ENCODE measurements at regions of chrX and their contacts with region 1.

Region 1: GRCh38 chrX:70168238-70169188 is 8.8 kb upstream of the DGAT2L6 start:
- DNase-seq: peak; percentile 49
- H3K4me3 ChIP-seq: no peak overlapping the region
- H3K27ac ChIP-seq: no peak overlapping the region
- H3K4me1 ChIP-seq: peaks cover 5% of the 10 kb centered on the region
- H3K27me3 ChIP-seq: no peaks in the 10 kb centered on the region
- CTCF ChIP-seq: no peak

Region 2: GRCh38 chrX:69510137-69510715 is 658.3 kb before region 1 on chrX:
- CTCF ChIA-PET with region 1: no interaction called
- POLR2A ChIA-PET with region 1: no interaction called
- intact Hi-C with region 1: no loop called
- DNase-seq: no peak
- H3K4me3 ChIP-seq: no peak overlapping the region
- H3K27ac ChIP-seq: no peak overlapping the region
- H3K4me1 ChIP-seq: no peaks in the 10 kb centered on the region
- H3K27me3 ChIP-seq: no peaks in the 10 kb centered on the region
- CTCF ChIP-seq: no peak

Region 3: GRCh38 chrX:70133303-70134115 is 35.0 kb before region 1 on chrX and contains the start of gene IGBP1:
- CTCF ChIA-PET with region 1: no interaction called
- POLR2A ChIA-PET with region 1: interaction called, 16 read pairs
- intact Hi-C with region 1: no loop called
- DNase-seq: peak; percentile 89
- H3K4me3 ChIP-seq: peak within 1 kb of the TSS; percentile 59
- H3K27ac ChIP-seq: peak within 1 kb of the TSS; percentile 87
- H3K4me1 ChIP-seq: no peaks in the 10 kb centered on the region
- H3K27me3 ChIP-seq: no peaks in the 10 kb centered on the region
- CTCF ChIP-seq: peak; percentile 62
- total RNA-seq, gene IGBP1: 35.2 and 36.2 TPM in 2 replicates

Region 4: DNA sequence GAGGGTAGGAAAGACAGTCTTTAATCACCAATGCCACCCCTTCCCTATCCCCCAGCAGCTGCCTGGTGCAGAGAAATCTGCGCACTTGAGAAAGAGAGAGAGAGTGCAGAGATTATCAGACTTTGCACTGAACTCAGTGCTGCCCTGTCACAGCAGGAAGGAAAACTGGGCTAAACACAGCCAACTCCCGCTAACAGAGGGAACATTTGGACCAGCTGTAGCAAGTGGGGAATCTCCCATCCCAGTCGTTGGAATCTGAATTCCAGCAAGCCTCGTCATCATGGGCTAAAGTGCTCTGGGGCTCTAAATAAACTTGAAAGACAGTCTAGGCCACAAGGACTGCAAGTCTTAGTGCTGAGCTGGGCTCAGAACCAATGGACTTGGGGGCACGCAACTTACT is 444.8 kb after region 1 on chrX:
- CTCF ChIA-PET with region 1: no interaction called
- POLR2A ChIA-PET with region 1: no interaction called
- intact Hi-C with region 1: no loop called
- DNase-seq: no peak
- H3K4me3 ChIP-seq: no peak overlapping the region
- H3K27ac ChIP-seq: no peak overlapping the region
- H3K4me1 ChIP-seq: no peaks in the 10 kb centered on the region
- H3K27me3 ChIP-seq: peaks cover 4% of the 10 kb centered on the region
- CTCF ChIP-seq: no peak

Region 5: DNA sequence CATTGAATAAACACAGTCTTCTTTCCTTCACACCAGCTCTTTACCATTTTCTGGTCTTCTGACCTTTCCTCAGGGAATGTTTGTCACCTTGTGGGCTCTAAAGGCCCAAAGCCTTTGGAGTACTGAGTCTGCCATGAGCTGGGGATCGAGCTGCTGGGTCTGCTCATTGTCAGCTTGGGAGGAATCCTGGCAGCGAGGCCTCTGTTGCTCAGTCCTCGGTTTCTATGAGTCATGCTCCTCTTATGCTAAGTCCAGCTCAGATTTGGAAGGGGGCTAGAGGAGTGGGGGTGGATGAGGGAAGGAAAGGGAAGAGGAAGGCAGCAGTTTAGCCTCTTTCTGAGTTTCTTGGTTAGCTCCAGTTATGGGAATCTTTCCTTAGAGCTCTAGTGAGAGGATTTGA is 1773.3 kb after region 1 on chrX:
- CTCF ChIA-PET with region 1: no interaction called
- POLR2A ChIA-PET with region 1: no interaction called
- intact Hi-C with region 1: no loop called
- DNase-seq: peak; percentile 19
- H3K4me3 ChIP-seq: no peak overlapping the region
- H3K27ac ChIP-seq: no peak overlapping the region
- H3K4me1 ChIP-seq: no peaks in the 10 kb centered on the region
- H3K27me3 ChIP-seq: no peaks in the 10 kb centered on the region
- CTCF ChIP-seq: no peak

Measured in A673 (cell line).